K562 (cell line): ENCODE measurements at regions of chr7 and their contacts with region 1.

Region 1: DNA sequence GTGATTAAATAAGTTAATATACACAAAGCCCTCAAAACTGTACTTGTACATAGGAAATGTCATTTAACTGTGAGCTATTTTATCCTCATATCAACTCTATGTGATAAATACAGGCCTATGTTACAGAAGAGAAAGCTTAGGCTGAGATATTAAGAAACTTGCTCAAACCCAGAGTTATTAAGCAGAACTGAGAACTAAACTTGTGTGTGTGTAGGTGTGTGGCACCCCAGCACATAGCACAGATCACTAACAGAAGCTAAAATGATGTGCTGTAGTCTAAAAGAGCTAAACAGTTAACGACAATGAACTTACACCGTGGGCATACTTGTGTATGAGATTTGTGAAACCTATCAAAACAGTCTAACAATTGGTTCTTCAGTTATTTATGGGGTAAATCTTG is 34.5 kb downstream of the MTPN start:
- DNase-seq: no peak
- ATAC-seq: peak; percentile 28
- H3K4me3 ChIP-seq: no peak overlapping the region
- H3K27ac ChIP-seq: peak overlapping the region; percentile 74
- H3K4me1 ChIP-seq: peaks cover 23 to 77% of the 10 kb centered on the region in 2 experiments
- H3K27me3 ChIP-seq: no peaks in the 10 kb centered on the region
- CTCF ChIP-seq: no peak
- EP300 ChIP-seq: no peak
- POLR2A ChIP-seq: no peak
- RAD21 ChIP-seq: no peak

Region 2: GRCh38 chr7:135924302-135924701 is 18.3 kb before region 1 on chr7:
- CTCF ChIA-PET with region 1: no interaction called
- POLR2A ChIA-PET with region 1: interaction called, 45 read pairs
- in situ Hi-C with region 1: no loop called
- intact Hi-C with region 1: loop called (anchors 2 kb)
- DNase-seq: no peak
- ATAC-seq: peak; percentile 48
- H3K4me3 ChIP-seq: no peak overlapping the region
- H3K27ac ChIP-seq: peak overlapping the region; percentile 63; the same call in 2 of the 3 replicates
- H3K4me1 ChIP-seq: peaks cover 10 to 28% of the 10 kb centered on the region in 2 experiments
- H3K27me3 ChIP-seq: no peaks in the 10 kb centered on the region
- CTCF ChIP-seq: no peak
- EP300 ChIP-seq: no peak
- POLR2A ChIP-seq: no peak; the same call in 1 of the 2 replicates
- RAD21 ChIP-seq: no peak

Region 3: GRCh38 chr7:135977007-135977741 is 34.6 kb after region 1 on chr7 and contains the start of gene MTPN:
- CTCF ChIA-PET with region 1: no interaction called
- POLR2A ChIA-PET with region 1: interaction called, 3 read pairs
- in situ Hi-C with region 1: no loop called
- intact Hi-C with region 1: loop called (anchors 2 kb)
- DNase-seq: peak; percentile 99 to 100 (median 99)
- ATAC-seq: peak; percentile 90
- H3K4me3 ChIP-seq: peak within 1 kb of the TSS; percentile 83
- H3K27ac ChIP-seq: peak within 1 kb of the TSS; percentile 78
- H3K4me1 ChIP-seq: peaks cover 19 to 61% of the 10 kb centered on the region in 2 experiments
- H3K27me3 ChIP-seq: no peaks in the 10 kb centered on the region
- CTCF ChIP-seq: no peak; a peak in 1 of 6 replicates
- EP300 ChIP-seq: no peak; the same call in 1 of the 2 replicates
- POLR2A ChIP-seq: peak; percentile 94
- RAD21 ChIP-seq: no peak; a peak in 1 of 4 replicates
- polyA plus RNA-seq, gene MTPN: 68.5 to 68.6 TPM

Region 4: DNA sequence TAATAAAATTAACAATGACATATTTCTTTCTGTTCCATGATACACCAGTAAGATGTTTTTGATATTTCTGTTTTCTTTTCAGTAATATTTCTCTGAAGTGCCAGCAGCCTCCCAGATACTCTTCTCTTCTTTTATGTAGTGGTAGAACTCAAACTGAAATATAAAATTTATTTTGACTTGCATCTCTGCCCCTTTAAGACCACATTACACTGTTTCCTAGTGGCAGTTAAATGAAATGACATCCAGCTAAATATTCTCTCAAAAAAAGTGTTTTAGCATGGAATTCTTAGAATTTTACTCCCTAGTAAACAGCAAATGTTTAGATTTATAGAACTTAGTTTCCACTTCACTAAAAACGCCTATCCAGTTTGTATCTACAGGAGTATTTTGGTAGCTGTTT is 271.7 kb after region 1 on chr7:
- CTCF ChIA-PET with region 1: no interaction called
- POLR2A ChIA-PET with region 1: no interaction called
- in situ Hi-C with region 1: no loop called
- intact Hi-C with region 1: no loop called
- DNase-seq: no peak
- ATAC-seq: no peak
- H3K4me3 ChIP-seq: no peak overlapping the region
- H3K27ac ChIP-seq: no peak overlapping the region
- H3K4me1 ChIP-seq: no peaks in the 10 kb centered on the region
- H3K27me3 ChIP-seq: no peaks in the 10 kb centered on the region
- CTCF ChIP-seq: peak in 1 of 3 experiments; percentile 6; a peak in 2 of 6 replicates
- EP300 ChIP-seq: no peak
- POLR2A ChIP-seq: no peak
- RAD21 ChIP-seq: no peak